ENCODE measurements at regions of chr2 and their contacts with region 1.

Region 1: DNA sequence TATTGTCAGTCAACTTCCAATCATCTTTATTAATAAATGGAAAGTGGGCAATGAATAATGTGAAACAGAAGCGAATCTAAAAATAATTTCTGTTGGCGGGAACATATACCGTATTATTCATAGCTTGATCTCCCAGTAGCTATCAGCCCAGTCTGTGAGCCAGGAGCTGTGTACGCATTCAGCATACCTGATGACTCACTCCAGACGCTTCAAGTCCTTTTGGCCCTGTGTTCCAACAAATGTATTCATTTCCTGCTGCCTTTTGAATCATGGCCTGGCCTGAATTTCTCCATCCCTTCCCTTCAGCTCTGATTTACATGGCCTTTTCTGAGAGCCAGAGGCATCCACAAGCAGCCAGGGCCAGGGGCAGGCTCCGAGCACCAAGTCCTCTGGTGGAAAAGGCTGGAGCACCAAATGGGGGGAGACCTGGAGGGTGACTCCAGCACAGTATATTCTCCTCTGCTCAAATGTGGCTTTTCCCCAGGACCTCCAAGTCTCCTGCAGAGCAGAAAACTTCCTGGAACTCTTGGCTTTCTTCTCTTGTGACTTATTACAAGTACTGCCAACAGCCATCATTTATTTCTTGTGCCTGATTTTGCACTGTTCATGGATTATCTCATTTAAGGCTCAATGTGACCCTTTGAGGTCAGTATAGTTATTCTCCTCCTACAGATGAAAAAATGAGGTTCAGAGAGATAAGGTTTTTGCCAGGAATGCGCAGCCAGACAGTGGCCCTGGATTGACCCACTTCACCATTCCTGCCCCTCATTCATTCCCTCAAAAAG is 108.7 kb downstream of the EN1 start:
- DNase-seq: peak in 1 of 2 donors; percentile 77
- ATAC-seq: peak; percentile 74
- H3K4me3 ChIP-seq: no peak overlapping the region
- H3K27ac ChIP-seq: peak overlapping the region in 1 of 2 donors; percentile 64
- H3K4me1 ChIP-seq: peaks cover 0 to 1% of the 10 kb centered on the region in 2 donors
- H3K27me3 ChIP-seq: no peaks in the 10 kb centered on the region

Region 2: DNA sequence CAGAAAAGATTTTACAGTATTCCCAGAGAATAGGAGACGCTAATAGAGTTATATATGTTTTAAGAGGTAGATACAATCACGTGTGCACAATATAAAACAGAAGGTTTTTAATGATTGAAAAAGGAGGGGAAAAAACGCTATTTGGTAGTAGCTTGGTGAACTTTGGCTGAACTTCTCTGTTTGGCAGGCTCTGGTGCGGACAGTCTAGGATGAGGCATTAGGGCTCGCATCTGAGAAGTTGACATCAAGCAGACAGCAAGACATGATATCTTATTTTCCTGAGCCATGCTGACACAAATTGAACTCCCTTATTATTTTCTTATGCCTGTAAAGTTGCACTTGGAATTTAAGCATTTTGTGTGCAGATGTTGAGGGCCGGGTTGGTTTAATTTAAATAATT is 67.9 kb before region 1 on chr2:
- intact Hi-C with region 1: loop called in 1 of 2 experiments (anchors 5 kb)
- DNase-seq: no peak
- ATAC-seq: no peak
- H3K4me3 ChIP-seq: no peak overlapping the region
- H3K27ac ChIP-seq: no peak overlapping the region
- H3K4me1 ChIP-seq: peaks cover 0 to 4% of the 10 kb centered on the region in 2 donors
- H3K27me3 ChIP-seq: no peaks in the 10 kb centered on the region